Activated CD8-positive, alpha-beta T cell treated with anti-CD3 and anti-CD28 coated beads, Interleukin-2, amount 10 ng/mL, durations not matched to agents 7 days and 5 days (primary cell): ENCODE measurements at regions of chr2 and their contacts with region 1.

Region 1: DNA sequence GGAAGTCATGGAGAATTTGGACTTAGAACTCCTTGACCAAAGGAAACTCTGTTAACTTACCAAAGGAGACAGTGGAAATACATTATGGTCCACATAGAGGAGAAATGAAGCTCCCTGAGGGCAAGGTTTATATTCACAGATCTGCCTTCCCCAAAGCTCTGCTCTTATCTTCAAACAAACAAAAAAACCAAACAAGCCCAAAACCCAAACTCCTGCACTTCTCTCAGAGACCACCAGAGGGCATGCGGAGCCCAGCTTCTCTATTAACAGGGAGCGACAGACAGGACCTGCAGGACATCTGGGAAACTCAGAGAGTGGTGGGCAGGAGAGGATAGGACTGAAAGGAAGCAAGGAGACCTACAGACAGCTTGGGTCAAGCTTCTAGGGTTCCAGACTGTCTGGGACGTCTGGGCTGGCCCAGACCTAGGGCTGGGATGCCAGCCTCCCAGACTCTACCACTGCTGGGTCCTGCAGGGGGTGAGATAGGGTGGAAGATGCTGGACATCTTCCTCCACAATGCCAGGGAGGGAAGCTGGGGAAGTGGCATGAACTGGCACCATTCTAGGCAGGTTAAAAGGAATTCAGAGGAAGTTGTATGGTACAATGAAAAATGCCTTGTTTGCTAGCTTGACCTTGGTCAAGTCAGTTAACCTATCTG is 4.0 kb upstream of the WNT10A start:
- DNase-seq: peak; percentile 76
- ATAC-seq: peak; percentile 14
- H3K4me3 Mint-ChIP-seq: no peak overlapping the region
- H3K27ac Mint-ChIP-seq: no peak overlapping the region
- H3K4me1 Mint-ChIP-seq: peaks cover 31% of the 10 kb centered on the region
- H3K27me3 Mint-ChIP-seq: peaks cover 63% of the 10 kb centered on the region

Region 2: GRCh38 chr2:218860950-218861381 is 15.7 kb before region 1 on chr2:
- CTCF ChIA-PET with region 1: interaction called, 16 read pairs
- POLR2A ChIA-PET with region 1: no interaction called
- DNase-seq: no peak
- ATAC-seq: peak; percentile 35
- H3K4me3 Mint-ChIP-seq: no peak overlapping the region
- H3K27ac Mint-ChIP-seq: no peak overlapping the region
- H3K4me1 Mint-ChIP-seq: peaks cover 14% of the 10 kb centered on the region
- H3K27me3 Mint-ChIP-seq: peaks cover 67% of the 10 kb centered on the region

Region 3: DNA sequence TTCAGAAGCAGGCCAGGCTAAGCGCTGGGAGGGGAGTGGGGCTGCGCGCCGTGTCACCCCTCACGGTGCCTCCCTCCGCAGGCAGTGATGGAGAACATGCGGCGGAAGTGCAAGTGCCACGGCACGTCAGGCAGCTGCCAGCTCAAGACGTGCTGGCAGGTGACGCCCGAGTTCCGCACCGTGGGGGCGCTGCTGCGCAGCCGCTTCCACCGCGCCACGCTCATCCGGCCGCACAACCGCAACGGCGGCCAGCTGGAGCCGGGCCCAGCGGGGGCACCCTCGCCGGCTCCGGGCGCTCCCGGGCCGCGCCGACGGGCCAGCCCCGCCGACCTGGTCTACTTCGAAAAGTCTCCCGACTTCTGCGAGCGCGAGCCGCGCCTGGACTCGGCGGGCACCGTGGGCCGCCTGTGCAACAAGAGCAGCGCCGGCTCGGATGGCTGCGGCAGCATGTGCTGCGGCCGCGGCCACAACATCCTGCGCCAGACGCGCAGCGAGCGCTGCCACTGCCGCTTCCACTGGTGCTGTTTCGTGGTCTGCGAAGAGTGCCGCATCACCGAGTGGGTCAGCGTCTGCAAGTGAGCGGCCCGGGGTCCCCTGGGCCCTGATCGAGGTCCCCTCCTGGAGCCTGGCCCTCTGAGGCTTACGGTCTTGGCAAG is 16.1 kb after region 1 on chr2:
- CTCF ChIA-PET with region 1: interaction called, 930 read pairs
- POLR2A ChIA-PET with region 1: interaction called, 31 read pairs
- DNase-seq: peak; percentile 84
- ATAC-seq: peak; percentile 61
- H3K4me3 Mint-ChIP-seq: peak overlapping the region; percentile 72
- H3K27ac Mint-ChIP-seq: peak overlapping the region; percentile 79
- H3K4me1 Mint-ChIP-seq: peaks cover 48% of the 10 kb centered on the region
- H3K27me3 Mint-ChIP-seq: peaks cover 52% of the 10 kb centered on the region

Region 4: DNA sequence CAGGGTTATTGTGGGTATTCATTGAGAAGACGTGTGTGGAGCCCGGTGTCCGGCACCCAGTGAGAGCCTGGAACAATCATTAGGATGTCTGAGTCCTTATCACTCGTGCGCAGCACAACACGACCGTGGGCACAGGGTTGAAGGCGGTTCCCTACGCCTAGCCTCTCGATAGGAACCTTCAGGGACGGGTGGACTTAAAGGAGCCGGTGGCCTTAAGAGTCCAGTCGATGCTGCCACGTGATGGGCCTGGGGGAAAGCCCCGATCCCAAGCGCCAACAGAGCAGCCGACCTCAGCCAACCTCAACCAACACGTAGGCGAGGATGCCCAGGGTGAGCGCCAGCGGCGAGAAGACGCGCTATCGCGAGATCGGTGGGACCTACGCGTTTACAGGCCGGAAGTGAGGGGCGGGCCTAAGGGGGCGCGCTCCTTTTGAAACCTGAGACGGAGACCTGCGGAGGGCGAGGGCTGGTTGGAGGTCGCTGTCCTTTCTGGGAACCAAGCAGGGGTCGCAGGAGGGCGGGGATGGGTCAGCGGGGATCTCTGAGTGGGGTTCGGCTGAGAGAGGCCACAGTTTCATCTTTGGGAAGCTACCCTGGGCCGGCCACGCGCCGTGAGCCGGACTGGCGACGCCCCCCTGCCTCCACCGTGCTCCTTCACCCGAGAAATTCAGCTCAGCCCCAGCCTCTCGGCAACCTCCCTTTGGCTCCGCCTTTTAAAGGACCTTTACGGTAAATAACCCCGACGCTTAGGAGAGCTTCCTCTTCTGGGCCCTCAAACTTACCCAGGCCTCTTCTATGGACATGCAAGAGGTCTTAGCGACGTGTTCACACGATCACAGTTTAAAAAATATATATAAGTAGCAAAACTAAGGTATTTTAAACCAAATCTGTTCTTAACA is 32.3 kb after region 1 on chr2:
- CTCF ChIA-PET with region 1: interaction called, 70 read pairs
- POLR2A ChIA-PET with region 1: interaction called, 3 read pairs
- DNase-seq: peak; percentile 92
- ATAC-seq: peak; percentile 97
- H3K4me3 Mint-ChIP-seq: peak overlapping the region; percentile 80
- H3K27ac Mint-ChIP-seq: peak overlapping the region; percentile 82
- H3K4me1 Mint-ChIP-seq: peaks cover 19% of the 10 kb centered on the region
- H3K27me3 Mint-ChIP-seq: peaks cover 21% of the 10 kb centered on the region

Region 5: DNA sequence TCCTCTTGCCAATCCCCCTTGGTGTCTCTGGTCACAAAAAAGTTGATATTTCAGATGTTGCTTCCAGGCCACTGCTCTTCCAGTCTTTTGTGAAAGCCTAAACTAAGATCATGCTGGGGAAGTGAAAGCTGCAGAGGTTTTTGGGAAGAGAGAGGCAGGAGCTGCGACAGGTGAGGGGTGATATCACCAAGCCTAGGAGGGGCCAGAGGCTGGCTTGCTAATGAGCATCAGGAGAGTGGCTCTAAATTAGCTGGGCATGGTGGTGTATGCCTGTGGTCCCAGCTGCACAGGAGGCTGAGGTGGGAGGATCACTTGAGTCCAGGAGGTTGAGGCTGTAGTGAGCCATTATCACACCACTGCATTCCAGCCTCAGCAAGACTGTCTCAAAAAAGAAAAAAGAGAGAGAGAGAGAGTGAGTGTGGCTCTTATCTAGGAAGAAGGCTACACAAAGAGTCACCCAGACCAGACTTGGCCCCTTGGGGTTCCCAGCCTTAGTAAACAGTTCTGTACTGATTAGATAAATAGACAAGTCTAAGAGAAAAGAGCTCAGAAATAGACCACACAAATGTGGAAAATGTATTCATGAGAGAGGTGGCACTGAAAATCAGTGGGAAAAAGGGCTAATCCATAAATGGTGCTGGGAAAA is 68.2 kb after region 1 on chr2:
- CTCF ChIA-PET with region 1: interaction called, 12 read pairs
- POLR2A ChIA-PET with region 1: no interaction called
- DNase-seq: no peak
- ATAC-seq: no peak
- H3K4me3 Mint-ChIP-seq: no peak overlapping the region
- H3K27ac Mint-ChIP-seq: no peak overlapping the region
- H3K4me1 Mint-ChIP-seq: no peaks in the 10 kb centered on the region
- H3K27me3 Mint-ChIP-seq: peaks cover 39% of the 10 kb centered on the region

Region 6: GRCh38 chr2:218979846-218980734 is 103.4 kb after region 1 on chr2:
- CTCF ChIA-PET with region 1: interaction called, 41 read pairs
- POLR2A ChIA-PET with region 1: no interaction called
- DNase-seq: peak; percentile 87
- ATAC-seq: peak; percentile 92
- H3K4me3 Mint-ChIP-seq: no peak overlapping the region
- H3K27ac Mint-ChIP-seq: no peak overlapping the region
- H3K4me1 Mint-ChIP-seq: peaks cover 26% of the 10 kb centered on the region
- H3K27me3 Mint-ChIP-seq: peaks cover 64% of the 10 kb centered on the region